Activated B cell treated with CpG ODN at 0.5 μM for 24 hours (primary cell): ENCODE measurements at regions of chr12 and their contacts with region 1.

Region 1: GRCh38 chr12:2944401-2945047 is 14.7 kb upstream of the TEAD4 start:
- DNase-seq: peak; percentile 32
- ATAC-seq: peak; percentile 69
- H3K4me3 Mint-ChIP-seq: no peak overlapping the region
- H3K27ac Mint-ChIP-seq: no peak overlapping the region
- H3K4me1 Mint-ChIP-seq: no peaks in the 10 kb centered on the region
- H3K27me3 Mint-ChIP-seq: peaks cover 4% of the 10 kb centered on the region
- CTCF ChIP-seq: no peak

Region 2: DNA sequence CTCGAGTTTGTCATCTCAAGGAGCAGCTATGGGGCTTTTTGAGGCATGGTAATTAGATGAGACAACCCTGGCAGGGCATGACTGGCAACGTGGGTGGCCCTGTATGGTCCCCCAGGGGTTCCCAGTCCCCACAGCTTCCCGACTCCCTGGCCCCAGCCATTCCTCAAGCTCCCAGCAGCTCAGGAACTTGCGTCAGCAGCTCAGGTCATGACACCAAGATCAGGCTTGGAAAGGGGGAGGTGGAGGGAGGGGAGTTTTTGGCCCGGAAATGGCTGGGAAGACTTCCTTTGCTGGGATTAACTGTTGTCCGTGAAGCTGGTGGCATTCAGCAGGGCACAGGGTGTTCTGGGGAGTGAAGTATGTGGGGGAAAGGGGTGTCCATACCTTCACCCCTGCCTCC is 99.2 kb before region 1 on chr12:
- CTCF ChIA-PET with region 1: interaction called, 7 read pairs
- POLR2A ChIA-PET with region 1: no interaction called
- intact Hi-C with region 1: loop called (anchors 1 kb)
- DNase-seq: no peak
- ATAC-seq: no peak
- H3K4me3 Mint-ChIP-seq: no peak overlapping the region
- H3K27ac Mint-ChIP-seq: no peak overlapping the region
- H3K4me1 Mint-ChIP-seq: no peaks in the 10 kb centered on the region
- H3K27me3 Mint-ChIP-seq: no peaks in the 10 kb centered on the region
- CTCF ChIP-seq: no peak

Region 3: DNA sequence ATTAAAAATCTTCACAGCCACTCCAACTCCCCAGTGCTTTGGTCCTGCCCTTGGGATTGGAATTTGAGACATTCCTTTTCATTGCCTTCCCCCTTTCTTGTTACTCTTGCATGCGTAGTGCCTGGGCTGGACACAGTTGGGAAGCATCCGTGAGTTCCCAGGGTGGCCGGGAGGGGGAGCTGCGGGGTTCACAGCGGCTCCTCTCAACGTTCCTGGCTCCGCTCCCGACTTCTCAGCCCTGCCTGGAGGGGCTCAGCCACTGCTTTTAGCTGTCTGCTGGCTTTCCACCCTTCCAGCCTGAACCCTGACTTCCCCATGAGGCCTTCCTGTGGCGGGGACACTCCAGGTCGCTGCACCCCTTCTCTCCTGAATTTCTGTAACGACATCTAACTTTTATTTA is 90.9 kb before region 1 on chr12:
- CTCF ChIA-PET with region 1: interaction called, 6 read pairs
- POLR2A ChIA-PET with region 1: no interaction called
- intact Hi-C with region 1: loop called (anchors 1 kb)
- DNase-seq: peak; percentile 28
- ATAC-seq: peak; percentile 45
- H3K4me3 Mint-ChIP-seq: no peak overlapping the region
- H3K27ac Mint-ChIP-seq: no peak overlapping the region
- H3K4me1 Mint-ChIP-seq: peaks cover 2% of the 10 kb centered on the region
- H3K27me3 Mint-ChIP-seq: no peaks in the 10 kb centered on the region
- CTCF ChIP-seq: no peak

Region 4: DNA sequence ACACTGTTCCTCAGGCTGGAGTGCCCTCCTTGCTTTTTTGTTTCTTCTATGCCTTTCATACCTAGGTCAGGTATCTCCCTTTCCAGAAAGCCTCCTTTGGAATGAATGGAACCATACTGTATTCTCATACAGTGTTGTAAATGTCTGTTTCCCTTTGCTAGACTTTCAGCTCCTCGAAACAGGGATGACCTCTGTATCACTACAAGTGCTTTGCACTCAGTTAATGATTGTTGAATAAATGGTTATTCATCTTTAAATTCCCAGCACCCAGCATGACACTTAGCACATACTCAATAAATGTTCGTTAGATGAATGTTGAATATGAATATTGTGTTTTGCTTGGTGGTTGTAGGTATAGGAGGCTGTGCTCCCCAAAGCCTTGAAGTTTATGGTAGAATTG is 59.7 kb before region 1 on chr12:
- CTCF ChIA-PET with region 1: no interaction called
- POLR2A ChIA-PET with region 1: no interaction called
- intact Hi-C with region 1: loop called (anchors 2 kb)
- DNase-seq: no peak
- ATAC-seq: no peak
- H3K4me3 Mint-ChIP-seq: no peak overlapping the region
- H3K27ac Mint-ChIP-seq: peak overlapping the region; percentile 77
- H3K4me1 Mint-ChIP-seq: peaks cover 18% of the 10 kb centered on the region
- H3K27me3 Mint-ChIP-seq: no peaks in the 10 kb centered on the region
- CTCF ChIP-seq: no peak